H1 (cell line): ENCODE measurements at regions of chr17 and their contacts with region 1.

Region 1: GRCh38 chr17:75147878-75148546 is 6.3 kb downstream of the JPT1 start:
- DNase-seq: no peak
- H3K4me3 ChIP-seq: no peak overlapping the region
- H3K27ac ChIP-seq: no peak overlapping the region
- H3K4me1 ChIP-seq: peaks cover 0 to 2% (median 1%) of the 10 kb centered on the region in 4 experiments; a peak in 2 of 7 replicates
- H3K27me3 ChIP-seq: no peaks in the 10 kb centered on the region
- CTCF ChIP-seq: no peak
- EP300 ChIP-seq: no peak
- POLR2A ChIP-seq: no peak
- RAD21 ChIP-seq: no peak

Region 2: DNA sequence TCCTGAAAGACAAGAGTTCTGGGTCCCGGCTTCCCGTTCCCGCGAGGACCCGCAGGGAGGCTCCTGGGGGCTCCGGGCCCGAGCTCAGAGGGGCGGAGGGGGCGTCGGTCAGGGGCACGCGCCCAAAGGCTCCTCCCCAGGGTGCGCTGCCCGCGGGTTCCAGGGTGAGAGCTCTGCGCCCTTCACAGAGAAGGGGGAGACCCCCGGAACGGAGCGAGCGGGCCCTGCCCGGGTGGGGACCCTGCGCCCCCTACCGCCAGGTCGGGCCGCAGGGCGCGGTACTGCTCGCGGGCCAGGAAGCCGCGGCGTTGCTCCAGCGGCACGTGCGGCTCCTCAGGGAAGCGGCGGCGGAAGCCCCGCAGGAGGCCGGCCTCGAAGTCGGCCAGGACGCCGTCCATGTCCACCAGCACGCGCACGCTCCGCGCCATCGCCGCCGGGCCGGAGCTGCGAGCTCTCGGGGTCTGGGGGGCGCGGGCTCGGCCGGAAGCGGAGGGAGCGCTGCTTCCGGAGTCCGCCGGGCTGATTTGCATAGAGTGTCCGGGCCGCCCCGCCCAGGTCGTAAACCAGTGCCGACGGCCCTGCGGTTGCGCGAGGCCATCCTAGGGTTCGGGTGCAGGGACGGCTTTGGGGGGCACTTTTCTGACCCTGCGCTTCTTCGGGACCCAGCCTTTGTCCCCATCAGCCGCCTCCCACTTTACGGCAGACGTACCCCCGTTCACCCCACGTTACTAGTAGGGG is 16.6 kb before region 1 on chr17 and contains the start of gene NT5C:
- CTCF ChIA-PET with region 1: interaction called, 26 read pairs
- POLR2A ChIA-PET with region 1: interaction called, 83 read pairs
- DNase-seq: peak; percentile 58 to 91
- H3K4me3 ChIP-seq: peak within 1 kb of the TSS; percentile 69 to 95 (median 74)
- H3K27ac ChIP-seq: peak within 1 kb of the TSS; percentile 81
- H3K4me1 ChIP-seq: peaks cover 0 to 5% (median 4%) of the 10 kb centered on the region in 4 experiments; a peak in 5 of 7 replicates
- H3K27me3 ChIP-seq: no peaks in the 10 kb centered on the region
- CTCF ChIP-seq: peak; percentile 65 to 72 (median 68)
- EP300 ChIP-seq: no peak
- POLR2A ChIP-seq: peak; percentile 72 to 75; a peak in 2 of 3 replicates
- RAD21 ChIP-seq: peak; percentile 32 to 42; a peak in 2 of 4 replicates
- total RNA-seq, gene NT5C: 52.1 and 66.9 TPM in 2 replicates